Right cardiac atrium (tissue), 5 donors: ENCODE measurements at regions of chr17 and their contacts with region 1.

Region 1: DNA sequence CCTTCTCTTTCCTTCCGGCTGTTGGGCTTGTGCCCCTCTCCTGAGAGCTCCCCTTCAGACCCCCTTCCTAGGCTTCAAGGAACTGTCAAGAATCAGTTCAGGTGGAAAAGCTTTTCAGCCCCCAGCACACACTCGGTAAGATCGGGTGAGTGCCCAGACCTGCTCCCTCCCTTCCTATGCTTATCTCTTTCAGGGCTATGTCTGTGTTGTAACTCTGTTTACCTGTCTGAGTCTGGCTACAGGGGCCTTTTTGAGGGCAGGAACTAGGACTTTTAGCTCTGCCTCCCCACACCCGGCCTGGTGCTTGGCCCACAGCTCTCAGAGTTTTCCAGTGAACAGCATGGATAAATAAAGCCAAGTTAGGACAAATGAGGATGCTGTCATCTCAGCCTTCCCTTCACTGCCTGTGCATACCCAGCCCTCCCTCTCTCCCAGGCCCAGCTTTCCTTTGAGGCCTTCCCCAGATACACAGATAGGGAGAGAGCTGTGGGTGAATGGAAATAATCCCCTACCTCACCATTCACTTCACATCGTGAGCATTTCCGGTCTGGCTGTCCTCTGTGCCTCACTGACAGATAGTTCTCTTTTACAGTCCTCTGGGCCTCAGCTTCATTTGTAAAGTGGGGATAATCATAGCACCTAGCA is 5.7 kb upstream of the MRPS23 start:
- DNase-seq: no peak
- ATAC-seq: no peak
- H3K4me3 ChIP-seq: no peak overlapping the region
- H3K27ac ChIP-seq: peak overlapping the region; percentile 22
- H3K4me1 ChIP-seq: peaks cover 3% of the 10 kb centered on the region
- H3K27me3 ChIP-seq: no peaks in the 10 kb centered on the region

Region 2: DNA sequence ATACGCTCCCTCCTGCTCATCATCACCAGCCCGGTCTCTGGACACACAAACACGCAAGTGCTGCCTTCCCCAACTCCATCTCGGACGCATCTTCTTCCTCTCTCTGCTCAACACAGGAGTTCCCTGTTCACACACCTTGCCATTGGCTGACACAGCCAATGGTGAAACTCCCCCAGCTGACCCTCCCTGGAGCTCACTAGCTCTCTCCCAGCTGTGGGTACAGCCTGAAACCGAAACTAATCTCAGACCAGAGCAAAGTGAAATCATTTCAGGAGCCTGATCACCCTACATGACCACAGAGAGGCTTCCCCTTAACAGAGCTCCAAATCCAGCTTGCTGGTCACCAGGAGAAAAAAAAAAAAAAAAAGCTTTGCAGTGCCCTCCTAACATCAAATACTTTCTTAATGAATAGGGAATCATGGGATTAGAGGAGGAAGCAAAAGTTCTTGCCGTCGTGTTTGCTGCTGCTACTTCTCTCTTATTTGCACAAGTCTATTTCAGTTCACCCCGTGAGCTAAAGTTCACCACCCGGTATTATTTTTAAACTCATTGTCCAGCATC is 91.4 kb after region 1 on chr17:
- intact Hi-C with region 1: no loop called
- DNase-seq: peak in 1 of 3 donors; percentile 69
- ATAC-seq: peak; percentile 65 to 76
- H3K4me3 ChIP-seq: peak overlapping the region; percentile 18
- H3K27ac ChIP-seq: peak overlapping the region; percentile 53
- H3K4me1 ChIP-seq: peaks cover 26% of the 10 kb centered on the region
- H3K27me3 ChIP-seq: no peaks in the 10 kb centered on the region

Region 3: DNA sequence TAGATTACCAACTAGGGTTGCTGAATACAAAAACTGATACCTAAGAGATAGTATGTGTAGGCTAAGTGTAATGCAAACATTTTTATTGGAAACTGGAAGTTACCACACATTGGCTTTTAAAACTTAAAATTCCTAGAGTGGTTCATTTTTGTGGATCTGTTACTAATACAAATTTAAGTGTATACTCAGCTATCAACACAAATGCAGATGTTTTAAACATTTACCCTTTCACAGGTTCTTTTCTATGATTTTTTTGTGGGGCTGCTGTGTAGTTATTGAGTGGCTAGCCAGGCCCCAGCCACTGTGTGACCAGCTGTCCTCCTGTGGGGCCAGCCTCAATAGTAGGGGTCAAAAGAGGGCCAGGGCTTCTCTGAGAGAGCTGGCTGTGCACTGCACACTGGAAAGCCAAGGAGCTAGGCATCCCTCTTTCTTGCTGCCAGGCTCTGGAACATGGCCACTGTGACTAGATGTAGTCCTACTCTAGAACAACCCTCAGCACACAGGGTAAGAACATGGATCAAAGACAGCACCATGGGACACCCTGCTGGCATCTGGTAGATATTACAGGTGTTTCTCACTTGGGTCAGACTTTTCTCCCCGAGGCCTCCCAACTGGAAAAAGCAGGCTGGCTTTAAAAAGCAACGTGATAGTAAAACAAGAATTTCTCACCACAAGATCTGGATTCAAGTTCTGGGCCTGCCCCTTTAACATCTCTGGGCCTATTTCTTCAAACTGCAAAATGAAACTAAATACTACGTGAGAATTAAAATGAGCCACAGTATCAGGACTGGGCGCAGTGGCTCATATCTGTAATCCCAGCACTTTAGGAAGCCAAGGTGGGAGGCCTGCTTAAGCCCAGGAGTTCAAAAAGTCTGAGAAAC is 139.8 kb after region 1 on chr17:
- intact Hi-C with region 1: loop called (anchors 2 to 5 kb)
- DNase-seq: peak; percentile 53 to 77 (median 63)
- ATAC-seq: peak; percentile 88 to 90
- H3K4me3 ChIP-seq: no peak overlapping the region
- H3K27ac ChIP-seq: no peak overlapping the region
- H3K4me1 ChIP-seq: peaks cover 6% of the 10 kb centered on the region
- H3K27me3 ChIP-seq: no peaks in the 10 kb centered on the region